Naive thymus-derived CD4-positive, alpha-beta T cell (primary cell): ENCODE measurements at regions of chr7 and their contacts with region 1.

Region 1: DNA sequence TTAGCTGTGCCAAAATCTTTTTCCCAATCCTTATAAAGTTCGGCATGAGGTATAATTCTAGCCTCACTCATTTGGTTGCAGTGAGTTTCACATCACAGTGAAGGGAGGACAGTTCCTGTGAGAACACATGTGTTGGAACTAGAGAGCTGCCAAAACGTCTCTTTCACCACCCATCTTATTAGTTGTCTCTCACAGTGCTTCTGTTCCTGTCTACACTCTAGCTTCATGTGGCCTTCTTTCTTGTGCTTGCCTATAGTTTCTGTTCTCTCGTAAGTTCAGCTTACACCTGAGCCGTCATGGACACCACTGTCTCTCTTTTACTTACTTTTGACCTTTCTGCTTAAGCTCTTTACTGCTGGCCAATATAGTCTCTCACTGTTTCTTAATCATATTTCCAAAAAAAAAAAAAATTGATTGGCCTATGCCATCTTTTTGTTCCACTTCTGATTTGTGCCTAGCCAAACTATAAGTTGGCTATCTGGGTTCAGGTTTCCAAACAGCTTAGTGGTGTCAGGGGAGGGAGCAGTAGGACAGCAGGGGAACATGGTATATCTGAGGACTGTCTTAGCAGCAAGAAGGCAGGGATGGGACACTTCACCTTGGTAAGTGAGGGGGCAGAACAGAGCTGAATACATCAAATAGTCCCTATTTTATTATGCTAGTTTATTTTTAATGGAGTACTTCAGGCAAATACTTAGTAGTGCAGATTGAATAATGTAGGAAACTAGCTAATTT is 38.0 kb downstream of the ZNRF2 start:
- DNase-seq: peak in 6 of 9 donors; percentile 9 to 48 (median 34)
- ATAC-seq: peak; percentile 86
- H3K4me3 ChIP-seq: peak overlapping the region; percentile 44
- H3K4me3 Mint-ChIP-seq: peak overlapping the region; percentile 72 to 92 (median 86)
- H3K27ac ChIP-seq: peak overlapping the region; percentile 75
- H3K27ac Mint-ChIP-seq: peak overlapping the region; percentile 88 to 97 (median 93)
- H3K4me1 ChIP-seq: peaks cover 20 to 26% of the 10 kb centered on the region in 2 donors
- H3K4me1 Mint-ChIP-seq: peaks cover 41 to 75% (median 71%) of the 10 kb centered on the region in 7 donors
- H3K27me3 ChIP-seq: no peaks in the 10 kb centered on the region
- H3K27me3 Mint-ChIP-seq: no peaks in the 10 kb centered on the region

Region 2: DNA sequence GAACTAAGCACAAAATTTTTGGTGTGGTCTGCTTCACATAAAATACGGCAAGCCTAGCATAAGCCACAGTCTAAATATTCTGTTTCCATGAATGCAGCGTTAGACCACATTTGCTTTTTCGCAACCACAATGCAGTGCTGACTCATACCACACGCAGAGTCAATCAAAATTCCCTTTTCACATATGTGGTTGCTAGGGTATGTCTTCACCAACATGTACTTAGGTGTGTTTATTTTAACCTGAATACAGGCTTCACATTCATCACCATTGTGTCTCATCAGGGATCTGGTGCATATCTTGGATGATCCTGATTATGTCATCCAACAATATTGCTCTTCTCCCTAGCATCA is 1037.0 kb before region 1 on chr7:
- CTCF ChIA-PET with region 1: no interaction called
- POLR2A ChIA-PET with region 1: no interaction called
- intact Hi-C with region 1: no loop called
- DNase-seq: peak in 1 of 9 donors; percentile 36
- ATAC-seq: peak; percentile 75
- H3K4me3 ChIP-seq: no peak overlapping the region
- H3K4me3 Mint-ChIP-seq: peak overlapping the region in 1 of 10 donors; percentile 4
- H3K27ac ChIP-seq: no peak overlapping the region
- H3K27ac Mint-ChIP-seq: peak overlapping the region in 1 of 9 donors; percentile 1
- H3K4me1 ChIP-seq: peaks cover 0 to 24% of the 10 kb centered on the region in 2 donors
- H3K4me1 Mint-ChIP-seq: peaks cover 0 to 13% (median 0%) of the 10 kb centered on the region in 7 donors
- H3K27me3 ChIP-seq: no peaks in the 10 kb centered on the region
- H3K27me3 Mint-ChIP-seq: peaks cover 0 to 58% (median 5%) of the 10 kb centered on the region in 5 donors

Region 3: GRCh38 chr7:30303312-30304039 is 19.0 kb before region 1 on chr7:
- CTCF ChIA-PET with region 1: interaction called, 3 read pairs
- POLR2A ChIA-PET with region 1: interaction called, 5 read pairs
- intact Hi-C with region 1: loop called in 1 of 2 experiments (anchors 1 kb)
- DNase-seq: no peak
- ATAC-seq: no peak
- H3K4me3 ChIP-seq: no peak overlapping the region
- H3K4me3 Mint-ChIP-seq: no peak overlapping the region
- H3K27ac ChIP-seq: no peak overlapping the region
- H3K27ac Mint-ChIP-seq: no peak overlapping the region
- H3K4me1 ChIP-seq: peaks cover 4 to 11% of the 10 kb centered on the region in 2 donors
- H3K4me1 Mint-ChIP-seq: peaks cover 28 to 79% (median 52%) of the 10 kb centered on the region in 7 donors
- H3K27me3 ChIP-seq: no peaks in the 10 kb centered on the region
- H3K27me3 Mint-ChIP-seq: no peaks in the 10 kb centered on the region

Region 4: GRCh38 chr7:30312178-30312577 is 10.3 kb before region 1 on chr7:
- CTCF ChIA-PET with region 1: no interaction called
- POLR2A ChIA-PET with region 1: no interaction called
- intact Hi-C with region 1: loop called (anchors 1 kb)
- DNase-seq: no peak
- ATAC-seq: no peak
- H3K4me3 ChIP-seq: no peak overlapping the region
- H3K4me3 Mint-ChIP-seq: no peak overlapping the region
- H3K27ac ChIP-seq: no peak overlapping the region
- H3K27ac Mint-ChIP-seq: no peak overlapping the region
- H3K4me1 ChIP-seq: peaks cover under 1 to 14% of the 10 kb centered on the region in 2 donors
- H3K4me1 Mint-ChIP-seq: peaks cover 26 to 71% (median 57%) of the 10 kb centered on the region in 7 donors
- H3K27me3 ChIP-seq: no peaks in the 10 kb centered on the region
- H3K27me3 Mint-ChIP-seq: no peaks in the 10 kb centered on the region